GM10248 (cell line): ENCODE measurements at regions of chr1 and their contacts with region 1.

Region 1: GRCh38 chr1:154546264-154547063 is 12.0 kb downstream of the UBE2Q1 start:
- DNase-seq: peak; percentile 82
- CTCF ChIP-seq: peak; percentile 89

Region 2: DNA sequence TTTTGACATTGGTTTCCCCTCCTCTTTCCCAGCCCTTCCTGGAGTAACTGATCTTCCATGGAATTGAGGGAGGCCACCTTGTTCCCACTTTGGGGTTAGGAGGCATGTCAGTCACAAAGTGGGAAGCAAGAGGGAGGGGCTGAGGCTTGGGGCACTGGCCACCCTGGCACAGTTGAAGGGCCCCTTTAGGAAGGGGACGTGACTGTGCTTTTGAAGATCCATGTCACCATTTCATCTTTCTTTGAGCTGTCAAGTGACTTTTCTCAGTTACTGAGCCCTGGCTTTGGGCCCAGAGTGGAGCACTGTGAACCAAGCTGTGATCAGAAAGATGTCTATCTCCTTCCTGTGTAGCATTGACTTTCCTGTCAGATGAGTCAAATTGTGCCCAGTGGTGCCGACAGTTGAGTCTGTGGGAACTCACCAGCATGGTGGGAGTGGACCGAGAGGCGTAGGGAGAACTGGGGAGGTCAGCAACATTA is 82.9 kb before region 1 on chr1:
- CTCF ChIA-PET with region 1: interaction called, 42 read pairs
- POLR2A ChIA-PET with region 1: no interaction called
- DNase-seq: no peak
- CTCF ChIP-seq: no peak

Region 3: GRCh38 chr1:154469844-154470560 is 76.5 kb before region 1 on chr1:
- CTCF ChIA-PET with region 1: interaction called, 369 read pairs
- POLR2A ChIA-PET with region 1: no interaction called
- DNase-seq: no peak
- CTCF ChIP-seq: no peak

Region 4: DNA sequence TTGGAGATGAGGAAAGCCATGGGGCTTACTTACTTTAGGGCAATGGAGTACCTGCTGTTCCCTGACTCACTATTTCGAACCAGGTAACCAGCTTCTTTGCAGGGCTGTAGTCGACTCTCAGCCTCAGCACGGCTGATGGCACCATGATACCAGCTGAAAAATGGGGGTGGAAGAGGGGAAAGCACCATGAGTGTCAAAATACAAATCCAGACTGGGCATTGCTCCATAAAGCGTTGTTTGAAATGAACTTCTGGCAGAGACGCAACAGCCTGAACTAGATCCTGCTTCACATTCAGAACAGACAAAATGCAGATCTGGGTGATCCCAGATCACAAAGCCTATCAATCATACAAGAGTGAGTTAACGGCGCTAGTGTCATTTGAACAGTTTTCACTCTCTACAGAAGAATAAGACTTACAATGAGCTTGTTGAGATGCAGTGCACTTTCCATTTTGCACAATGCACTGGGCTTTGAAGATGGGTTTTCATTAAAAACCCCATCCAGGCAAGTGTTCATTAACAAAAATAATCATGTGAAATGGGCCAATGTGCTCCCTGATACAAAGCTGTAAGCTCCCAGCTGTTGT is 60.5 kb before region 1 on chr1:
- CTCF ChIA-PET with region 1: interaction called, 369 read pairs
- POLR2A ChIA-PET with region 1: interaction called, 3 read pairs
- DNase-seq: no peak
- CTCF ChIP-seq: no peak

Region 5: DNA sequence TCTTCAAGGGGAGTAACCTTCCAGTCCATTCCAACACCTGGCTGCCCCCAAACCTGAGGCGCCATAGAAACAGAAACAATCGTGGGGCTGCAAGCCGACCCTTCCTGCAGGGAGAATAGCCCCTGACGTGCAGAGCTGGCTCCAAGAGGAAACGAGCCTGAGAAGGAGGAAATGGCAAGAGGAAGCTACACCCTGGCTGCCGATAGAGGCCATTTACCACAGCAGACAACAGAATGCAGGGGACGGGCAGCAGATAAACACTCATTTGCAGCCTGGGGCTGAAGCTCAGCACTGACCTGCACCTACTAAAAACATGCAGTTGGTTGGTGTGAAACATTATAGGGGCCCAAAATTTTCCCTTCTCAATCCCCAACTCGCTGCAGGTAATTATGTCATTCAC is 53.2 kb before region 1 on chr1:
- CTCF ChIA-PET with region 1: interaction called, 27 read pairs
- POLR2A ChIA-PET with region 1: no interaction called
- DNase-seq: no peak
- CTCF ChIP-seq: no peak

Region 6: GRCh38 chr1:154501423-154502065 is 44.9 kb before region 1 on chr1:
- CTCF ChIA-PET with region 1: interaction called, 11 read pairs
- POLR2A ChIA-PET with region 1: no interaction called
- DNase-seq: peak; percentile 40
- CTCF ChIP-seq: no peak

Region 7: GRCh38 chr1:154533952-154534844 is 12.3 kb before region 1 on chr1:
- CTCF ChIA-PET with region 1: interaction called, 14 read pairs
- POLR2A ChIA-PET with region 1: no interaction called
- DNase-seq: peak; percentile 38
- CTCF ChIP-seq: peak; percentile 10